Sigmoid colon (tissue), 7 donors: ENCODE measurements at regions of chr10 and their contacts with region 1.

Region 1: DNA sequence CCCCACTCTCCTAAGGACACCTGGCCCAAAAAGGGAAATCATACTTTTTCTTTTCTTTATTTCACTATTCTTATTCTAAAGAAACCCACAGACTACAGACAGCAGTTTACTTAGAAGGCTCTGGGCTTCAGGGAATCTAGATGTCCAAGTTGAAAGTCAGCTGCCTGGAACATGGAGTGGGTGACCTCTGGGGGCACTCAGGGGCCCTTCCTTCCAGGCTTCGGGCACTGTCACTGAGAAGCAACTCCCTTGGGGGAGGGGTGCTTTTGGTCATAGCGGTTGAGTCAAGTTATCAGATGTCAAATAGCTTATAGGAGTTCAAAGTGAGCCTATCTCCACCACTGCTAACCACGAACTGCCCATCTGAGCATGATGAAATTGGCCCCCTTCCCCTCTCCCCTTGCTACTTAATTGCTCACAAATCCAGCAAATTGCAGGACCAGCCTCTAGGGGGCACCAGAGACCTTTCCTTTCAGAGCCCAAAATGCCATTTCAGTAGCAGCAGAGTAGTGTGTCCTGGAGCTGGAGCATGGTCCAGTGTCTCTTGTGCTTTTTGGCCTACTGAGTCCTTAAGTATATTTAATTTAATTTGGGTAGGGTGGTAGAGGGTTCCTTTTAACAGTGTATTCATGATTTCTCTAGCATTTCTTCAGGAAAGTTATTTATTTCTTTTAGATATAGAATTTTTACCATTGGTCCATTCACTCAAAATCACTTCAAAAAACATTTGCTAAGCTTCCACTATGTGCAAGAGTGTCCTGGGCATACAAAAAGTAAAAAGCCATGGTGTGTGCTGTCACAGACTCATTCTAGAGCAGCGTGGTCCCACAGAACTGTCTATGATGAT is 463.8 kb downstream of the KCNMA1 start:
- DNase-seq: peak; percentile 86
- H3K4me3 ChIP-seq: no peak overlapping the region
- H3K27ac ChIP-seq: peak overlapping the region; percentile 46 to 84 (median 76)
- H3K4me1 ChIP-seq: peaks cover 0 to 47% (median 46%) of the 10 kb centered on the region in 4 donors
- H3K27me3 ChIP-seq: no peaks in the 10 kb centered on the region
- CTCF ChIP-seq: peak; percentile 82 to 92 (median 86)
- EP300 ChIP-seq: no peak
- POLR2A ChIP-seq: no peak

Region 2: DNA sequence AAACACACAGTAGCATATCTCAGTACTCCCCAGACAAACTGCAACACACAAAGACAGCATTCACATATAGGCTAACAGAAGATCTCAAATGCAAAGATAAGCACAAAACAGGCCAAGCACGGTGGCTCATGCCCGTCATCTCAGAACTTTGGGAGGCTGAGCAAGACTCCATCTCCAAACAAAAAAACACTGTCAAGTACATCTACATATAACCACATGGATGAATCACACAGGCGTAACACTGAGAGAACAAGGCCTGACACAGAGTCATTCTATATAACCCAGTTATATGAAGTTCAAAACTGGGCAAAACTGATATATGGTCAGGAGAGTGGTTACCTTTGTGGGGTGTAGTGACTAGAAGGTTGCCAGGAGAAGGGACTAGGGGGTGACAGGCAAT is 42.6 kb before region 1 on chr10:
- intact Hi-C with region 1: no loop called
- DNase-seq: no peak
- H3K4me3 ChIP-seq: no peak overlapping the region
- H3K27ac ChIP-seq: no peak overlapping the region
- H3K4me1 ChIP-seq: no peaks in the 10 kb centered on the region
- H3K27me3 ChIP-seq: no peaks in the 10 kb centered on the region
- CTCF ChIP-seq: no peak
- EP300 ChIP-seq: no peak
- POLR2A ChIP-seq: no peak

Region 3: GRCh38 chr10:77380191-77380590 is 206.4 kb after region 1 on chr10:
- intact Hi-C with region 1: no loop called
- DNase-seq: no peak
- H3K4me3 ChIP-seq: no peak overlapping the region
- H3K27ac ChIP-seq: no peak overlapping the region
- H3K4me1 ChIP-seq: peaks cover 0 to 43% (median 22%) of the 10 kb centered on the region in 4 donors
- H3K27me3 ChIP-seq: no peaks in the 10 kb centered on the region
- CTCF ChIP-seq: no peak
- EP300 ChIP-seq: no peak
- POLR2A ChIP-seq: no peak

Region 4: GRCh38 chr10:77391605-77392235 is 217.9 kb after region 1 on chr10:
- intact Hi-C with region 1: loop called (anchors 5 kb)
- DNase-seq: peak; percentile 92
- H3K4me3 ChIP-seq: no peak overlapping the region
- H3K27ac ChIP-seq: peak overlapping the region; percentile 61 to 87 (median 78)
- H3K4me1 ChIP-seq: peaks cover 0 to 87% (median 82%) of the 10 kb centered on the region in 4 donors
- H3K27me3 ChIP-seq: no peaks in the 10 kb centered on the region
- CTCF ChIP-seq: peak; percentile 53 to 72 (median 67)
- EP300 ChIP-seq: no peak
- POLR2A ChIP-seq: no peak